Heart right ventricle (tissue), 16 donors: ENCODE measurements at regions of chr13 and their contacts with region 1.

Region 1: GRCh38 chr13:36736119-36736726 is 62.4 kb downstream of the SERTM1 start:
- DNase-seq: peak in 1 of 2 donors; percentile 40
- ATAC-seq: no peak
- H3K4me3 ChIP-seq: no peak overlapping the region
- H3K27ac ChIP-seq: no peak overlapping the region
- H3K4me1 ChIP-seq: no peaks in the 10 kb centered on the region
- H3K27me3 ChIP-seq: no peaks in the 10 kb centered on the region
- CTCF ChIP-seq: peak; percentile 61 to 80 (median 72)

Region 2: GRCh38 chr13:35978603-35979316 is 757.5 kb before region 1 on chr13:
- intact Hi-C with region 1: loop called in 3 of 10 experiments (anchors 5 to 10 kb)
- DNase-seq: peak in 1 of 2 donors; percentile 57
- ATAC-seq: peak in 6 of 8 donors; percentile 13 to 71 (median 59)
- H3K4me3 ChIP-seq: peak overlapping the region in 2 of 10 donors; percentile 7 to 8
- H3K27ac ChIP-seq: peak overlapping the region in 8 of 10 donors; percentile 5 to 77 (median 59)
- H3K4me1 ChIP-seq: peaks cover 0 to 15% (median 7%) of the 10 kb centered on the region in 9 donors
- H3K27me3 ChIP-seq: no peaks in the 10 kb centered on the region
- CTCF ChIP-seq: peak; percentile 72 to 90 (median 84)

Region 3: DNA sequence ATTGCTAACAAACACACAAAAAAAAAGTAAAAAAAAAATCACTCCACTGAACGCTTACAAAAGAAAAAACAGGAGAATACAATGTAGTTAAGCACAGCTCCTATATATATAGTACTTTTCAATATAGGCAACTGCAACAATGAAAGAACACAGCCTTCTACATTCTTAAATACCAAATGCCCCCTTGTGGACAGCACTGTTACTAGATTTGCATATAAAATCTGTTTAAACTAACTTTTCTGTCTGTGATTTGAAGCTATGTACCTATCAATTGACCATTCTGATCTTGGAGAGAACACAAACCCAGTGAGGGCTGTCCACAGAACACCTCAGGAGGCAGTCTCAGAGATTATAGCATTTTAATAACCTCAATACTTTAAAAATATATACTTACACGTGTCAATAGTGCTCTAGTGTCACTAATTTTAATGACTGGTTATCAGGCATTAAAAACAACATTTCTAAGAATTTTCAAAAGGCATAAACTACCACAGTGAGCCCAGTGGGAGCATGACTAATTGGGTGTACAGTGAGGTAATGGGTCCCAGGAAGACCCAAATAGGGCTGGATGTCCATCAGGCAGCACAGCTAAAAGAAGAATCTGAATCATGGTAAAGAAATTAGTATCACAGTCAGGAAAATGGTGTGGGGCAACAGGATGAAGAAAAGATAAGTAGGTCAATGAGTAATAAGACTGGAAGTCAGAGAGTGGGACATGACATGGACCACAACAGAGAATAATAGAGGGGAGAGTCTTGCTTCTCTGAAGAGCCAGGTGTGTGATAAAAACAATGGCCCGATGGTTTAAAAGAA is 460.8 kb before region 1 on chr13:
- intact Hi-C with region 1: loop called in 9 of 10 experiments (anchors 2 to 10 kb)
- DNase-seq: peak in 1 of 2 donors; percentile 48
- ATAC-seq: peak in 3 of 8 donors; percentile 54 to 60 (median 55)
- H3K4me3 ChIP-seq: no peak overlapping the region
- H3K27ac ChIP-seq: no peak overlapping the region
- H3K4me1 ChIP-seq: no peaks in the 10 kb centered on the region
- H3K27me3 ChIP-seq: no peaks in the 10 kb centered on the region
- CTCF ChIP-seq: peak; percentile 25 to 82 (median 63)

Region 4: GRCh38 chr13:36282818-36283445 is 453.3 kb before region 1 on chr13:
- intact Hi-C with region 1: loop called in 9 of 10 experiments (anchors 2 to 10 kb)
- DNase-seq: no peak
- ATAC-seq: peak in 2 of 8 donors; percentile 57 to 61
- H3K4me3 ChIP-seq: no peak overlapping the region
- H3K27ac ChIP-seq: no peak overlapping the region
- H3K4me1 ChIP-seq: peaks cover 0 to 4% (median 0%) of the 10 kb centered on the region in 9 donors
- H3K27me3 ChIP-seq: no peaks in the 10 kb centered on the region
- CTCF ChIP-seq: peak; percentile 55 to 86 (median 79)

Region 5: DNA sequence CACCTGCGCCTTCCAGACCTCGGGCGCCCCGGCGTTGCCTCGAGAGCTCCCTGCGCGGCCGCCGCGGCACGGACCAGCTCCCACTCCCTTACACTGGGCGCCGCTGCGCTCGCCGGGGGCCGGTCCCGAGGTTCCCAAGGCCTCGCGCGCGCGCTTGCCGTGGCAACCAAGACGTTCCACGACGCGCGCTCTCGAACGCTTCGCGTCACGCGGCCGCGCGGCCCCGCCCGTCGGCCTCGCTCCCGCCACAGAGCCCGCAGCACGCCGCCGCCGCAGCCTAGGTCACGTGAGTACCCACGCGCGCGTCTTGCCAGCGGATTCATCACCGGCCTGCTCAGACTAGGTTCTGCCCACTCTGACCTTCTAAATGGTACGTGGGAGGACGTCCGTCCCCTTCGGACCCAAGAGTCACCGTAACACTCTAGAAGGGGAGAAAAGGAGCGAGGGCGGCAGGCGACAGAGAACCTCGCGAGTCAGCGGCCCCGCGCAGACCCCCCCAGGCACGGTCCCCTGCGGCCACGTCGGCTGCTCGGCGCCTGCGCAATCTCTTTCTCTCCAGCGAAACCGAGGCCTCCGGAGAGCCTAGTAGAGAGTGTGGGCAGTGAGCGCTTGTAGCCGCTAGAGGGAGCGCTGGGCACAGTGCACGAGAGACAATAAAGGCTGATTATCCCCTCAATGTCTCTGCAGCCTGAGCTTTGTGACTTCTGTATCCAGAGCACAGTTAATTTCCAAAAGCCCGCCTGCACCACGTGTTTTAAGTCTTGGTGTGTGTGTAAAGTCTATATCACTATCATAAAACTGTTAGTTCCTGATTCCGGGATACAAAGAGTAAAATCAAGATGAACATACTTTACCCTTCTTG is 389.8 kb before region 1 on chr13 and contains the start of gene SPART:
- intact Hi-C with region 1: loop called in 1 of 10 experiments (anchors 10 kb)
- DNase-seq: peak; percentile 91 to 93
- ATAC-seq: peak; percentile 91 to 96 (median 94)
- H3K4me3 ChIP-seq: peak within 1 kb of the TSS; percentile 62 to 93 (median 72)
- H3K27ac ChIP-seq: peak within 1 kb of the TSS; percentile 87 to 99 (median 96)
- H3K4me1 ChIP-seq: peaks cover 0 to 45% (median 26%) of the 10 kb centered on the region in 9 donors
- H3K27me3 ChIP-seq: no peaks in the 10 kb centered on the region
- CTCF ChIP-seq: peak; percentile 92 to 100 (median 98)
- total RNA-seq, gene SPART: 29.3 to 49.8 (median 38.5) TPM

Region 6: GRCh38 chr13:36420437-36420891 is 315.8 kb before region 1 on chr13:
- intact Hi-C with region 1: loop called in 4 of 10 experiments (anchors 5 to 10 kb)
- DNase-seq: peak; percentile 30 to 64
- ATAC-seq: peak; percentile 55 to 77 (median 69)
- H3K4me3 ChIP-seq: no peak overlapping the region
- H3K27ac ChIP-seq: no peak overlapping the region
- H3K4me1 ChIP-seq: peaks cover 0 to 19% (median 0%) of the 10 kb centered on the region in 9 donors
- H3K27me3 ChIP-seq: peaks cover 0 to 22% (median 0%) of the 10 kb centered on the region in 7 donors
- CTCF ChIP-seq: peak; percentile 73 to 92 (median 87)

Region 7: DNA sequence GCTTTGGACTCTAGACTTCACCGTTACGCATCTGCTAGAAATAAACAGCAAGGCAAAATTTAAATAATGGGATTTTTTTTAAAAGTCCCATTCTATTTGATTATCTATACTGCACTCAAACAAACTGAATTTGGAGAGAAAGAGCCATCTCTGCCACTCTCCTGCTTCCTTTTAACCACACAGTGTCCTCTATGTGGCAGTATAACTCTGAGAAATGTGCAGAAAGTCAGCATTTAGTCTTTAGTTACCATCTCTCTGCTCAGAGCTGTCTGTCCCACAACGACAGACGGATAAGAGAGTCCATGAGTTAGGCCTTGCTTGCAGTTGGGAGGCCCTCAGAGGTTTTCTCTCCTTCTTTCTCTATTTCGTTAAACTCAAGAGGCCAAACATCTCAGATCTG is 282.7 kb before region 1 on chr13:
- intact Hi-C with region 1: loop called in 8 of 10 experiments (anchors 1 to 5 kb)
- DNase-seq: no peak
- ATAC-seq: peak in 4 of 8 donors; percentile 43 to 63 (median 52)
- H3K4me3 ChIP-seq: no peak overlapping the region
- H3K27ac ChIP-seq: no peak overlapping the region
- H3K4me1 ChIP-seq: no peaks in the 10 kb centered on the region
- H3K27me3 ChIP-seq: peaks cover 0 to 28% (median 0%) of the 10 kb centered on the region in 7 donors
- CTCF ChIP-seq: peak in 8 of 9 donors; percentile 11 to 58 (median 47)

Region 8: DNA sequence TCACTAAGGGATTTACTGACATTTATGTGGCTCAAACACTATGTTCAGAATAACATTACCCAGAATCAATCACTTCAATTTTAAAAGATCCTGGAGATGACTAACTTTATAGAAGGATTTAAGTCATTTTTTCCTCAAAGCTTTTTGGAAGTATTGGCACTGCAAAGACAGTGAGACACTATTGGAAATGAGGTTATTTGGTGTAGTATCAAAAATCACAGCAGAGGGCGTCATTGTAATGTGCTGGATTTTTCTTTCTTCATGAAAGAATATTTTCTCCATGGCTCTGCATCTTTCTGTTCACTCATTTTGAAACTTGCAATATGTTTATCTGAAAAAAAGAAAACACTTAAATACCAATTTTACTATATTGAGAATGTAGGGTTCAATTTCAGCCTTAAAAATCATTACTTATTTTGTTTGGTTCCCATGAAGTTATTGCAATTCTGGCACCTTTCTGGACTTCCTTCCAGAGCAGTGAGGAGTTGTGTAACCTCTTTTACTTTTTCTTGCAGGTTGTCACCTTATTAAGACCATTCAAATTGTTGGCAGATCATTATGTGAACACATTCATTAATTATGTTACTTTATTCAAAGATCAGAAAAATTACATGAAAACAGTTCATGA is 372.9 kb after region 1 on chr13:
- intact Hi-C with region 1: no loop called
- DNase-seq: peak in 1 of 2 donors; percentile 23
- ATAC-seq: peak in 7 of 8 donors; percentile 42 to 68 (median 59)
- H3K4me3 ChIP-seq: no peak overlapping the region
- H3K27ac ChIP-seq: no peak overlapping the region
- H3K4me1 ChIP-seq: peaks cover 0 to 10% (median 0%) of the 10 kb centered on the region in 9 donors
- H3K27me3 ChIP-seq: no peaks in the 10 kb centered on the region
- CTCF ChIP-seq: peak; percentile 52 to 84 (median 72)

Region 9: DNA sequence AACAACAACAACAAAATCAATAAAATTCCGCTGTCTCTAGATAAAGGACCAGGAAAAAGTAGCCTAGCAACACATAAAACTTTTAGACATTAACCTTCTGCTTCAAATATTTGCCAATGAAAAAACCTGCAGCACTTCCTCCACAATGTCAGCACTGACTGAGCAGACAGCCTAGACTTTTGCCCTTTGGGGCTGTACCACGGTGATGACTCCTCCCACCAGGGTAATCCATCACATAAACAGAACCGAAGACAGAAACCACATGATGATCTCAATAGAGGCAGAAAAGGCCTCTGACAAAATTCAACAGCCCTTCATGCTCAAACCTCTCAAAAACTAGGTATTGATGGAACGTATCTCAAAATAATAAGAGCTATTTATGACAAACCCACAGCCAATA is 1163.5 kb after region 1 on chr13:
- intact Hi-C with region 1: no loop called
- DNase-seq: no peak
- ATAC-seq: no peak
- H3K4me3 ChIP-seq: no peak overlapping the region
- H3K27ac ChIP-seq: no peak overlapping the region
- H3K4me1 ChIP-seq: no peaks in the 10 kb centered on the region
- H3K27me3 ChIP-seq: no peaks in the 10 kb centered on the region
- CTCF ChIP-seq: no peak